ENCODE measurements at regions of chr10 and their contacts with region 1.

Region 1: DNA sequence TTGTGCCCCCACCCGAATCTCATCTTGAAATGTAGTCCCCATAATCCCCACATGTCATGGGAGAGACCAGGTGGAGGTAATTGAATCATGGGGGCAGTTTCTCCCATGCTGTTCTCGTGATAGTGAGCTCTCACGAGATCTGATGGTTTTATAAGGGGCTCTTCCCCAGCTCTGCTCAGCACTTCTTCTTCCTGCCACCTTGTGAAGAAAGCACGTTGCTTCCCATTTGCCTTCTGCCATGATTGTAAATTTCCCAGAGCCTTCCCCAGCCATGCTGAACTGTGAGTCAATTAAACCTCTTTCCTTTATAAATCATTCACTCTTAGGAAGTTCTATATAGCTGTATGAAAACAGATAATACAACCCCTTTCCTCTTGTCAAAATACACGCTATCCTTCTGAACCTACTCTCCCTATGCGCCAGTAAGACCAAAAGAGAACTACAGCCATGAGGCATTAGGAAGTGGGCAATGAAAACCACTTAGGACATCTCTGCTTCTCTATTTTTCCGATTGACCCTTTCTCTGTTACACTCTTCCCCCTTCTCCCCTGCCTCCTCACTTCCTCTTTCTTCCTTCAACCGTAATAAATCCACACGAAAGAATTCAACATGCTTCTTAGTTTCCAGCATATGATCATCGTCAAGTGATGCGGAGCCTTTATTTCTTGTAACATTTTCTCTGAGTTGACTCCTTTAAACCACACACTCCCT is 101.2 kb upstream of the WDR11 start:
- DNase-seq: no peak
- CTCF ChIP-seq: no peak

Region 2: DNA sequence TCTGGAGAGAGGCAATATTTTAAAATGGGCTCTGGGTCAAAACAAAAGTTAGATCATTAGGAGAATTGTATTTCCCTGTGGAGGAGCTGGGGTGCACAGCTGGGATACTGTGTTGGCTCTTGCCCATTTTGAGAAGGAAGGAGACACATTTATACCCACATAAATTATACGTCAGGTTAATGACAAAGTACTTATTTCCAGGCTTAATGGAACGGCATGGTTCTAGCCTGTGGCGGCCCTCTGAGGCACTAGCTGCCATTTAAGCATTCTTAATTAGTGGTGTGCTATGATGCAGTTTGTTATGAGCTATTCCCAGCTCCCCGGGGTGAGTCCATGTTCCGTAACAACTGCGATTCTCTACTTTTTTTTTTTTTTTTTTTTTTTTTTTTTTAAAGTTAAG is 663.9 kb before region 1 on chr10:
- CTCF ChIA-PET with region 1: no interaction called
- POLR2A ChIA-PET with region 1: no interaction called
- DNase-seq: no peak
- CTCF ChIP-seq: no peak

Region 3: GRCh38 chr10:120473593-120473992 is 276.4 kb before region 1 on chr10:
- CTCF ChIA-PET with region 1: no interaction called
- POLR2A ChIA-PET with region 1: no interaction called
- DNase-seq: no peak
- CTCF ChIP-seq: no peak

Region 4: DNA sequence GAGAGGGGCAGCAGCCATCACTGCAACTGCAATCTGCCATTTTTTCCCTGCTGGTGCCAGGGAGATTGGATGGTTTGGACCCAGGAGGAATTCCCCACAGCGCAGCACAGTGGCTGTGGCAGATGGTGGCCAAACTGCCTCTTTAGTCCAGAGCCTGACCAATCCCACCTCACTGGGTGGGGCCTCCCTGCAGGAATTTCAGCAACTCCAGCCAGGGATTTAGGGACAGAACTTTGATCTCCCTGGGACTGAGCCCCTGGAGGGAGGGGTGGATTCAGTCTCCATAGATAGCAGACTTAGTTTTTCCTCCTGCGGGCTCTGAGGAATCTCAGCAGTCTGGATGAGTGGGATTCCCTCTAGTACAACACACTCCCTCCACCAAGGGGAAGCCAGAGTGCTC is 78.5 kb before region 1 on chr10:
- CTCF ChIA-PET with region 1: no interaction called
- POLR2A ChIA-PET with region 1: no interaction called
- DNase-seq: no peak
- CTCF ChIP-seq: no peak

Region 5: GRCh38 chr10:120735773-120736371 is 14.1 kb before region 1 on chr10:
- CTCF ChIA-PET with region 1: interaction called, 23 read pairs
- POLR2A ChIA-PET with region 1: no interaction called
- DNase-seq: peak; percentile 22
- CTCF ChIP-seq: peak; percentile 50